ENCODE measurements at regions of chr5 and their contacts with region 1.

Region 1: DNA sequence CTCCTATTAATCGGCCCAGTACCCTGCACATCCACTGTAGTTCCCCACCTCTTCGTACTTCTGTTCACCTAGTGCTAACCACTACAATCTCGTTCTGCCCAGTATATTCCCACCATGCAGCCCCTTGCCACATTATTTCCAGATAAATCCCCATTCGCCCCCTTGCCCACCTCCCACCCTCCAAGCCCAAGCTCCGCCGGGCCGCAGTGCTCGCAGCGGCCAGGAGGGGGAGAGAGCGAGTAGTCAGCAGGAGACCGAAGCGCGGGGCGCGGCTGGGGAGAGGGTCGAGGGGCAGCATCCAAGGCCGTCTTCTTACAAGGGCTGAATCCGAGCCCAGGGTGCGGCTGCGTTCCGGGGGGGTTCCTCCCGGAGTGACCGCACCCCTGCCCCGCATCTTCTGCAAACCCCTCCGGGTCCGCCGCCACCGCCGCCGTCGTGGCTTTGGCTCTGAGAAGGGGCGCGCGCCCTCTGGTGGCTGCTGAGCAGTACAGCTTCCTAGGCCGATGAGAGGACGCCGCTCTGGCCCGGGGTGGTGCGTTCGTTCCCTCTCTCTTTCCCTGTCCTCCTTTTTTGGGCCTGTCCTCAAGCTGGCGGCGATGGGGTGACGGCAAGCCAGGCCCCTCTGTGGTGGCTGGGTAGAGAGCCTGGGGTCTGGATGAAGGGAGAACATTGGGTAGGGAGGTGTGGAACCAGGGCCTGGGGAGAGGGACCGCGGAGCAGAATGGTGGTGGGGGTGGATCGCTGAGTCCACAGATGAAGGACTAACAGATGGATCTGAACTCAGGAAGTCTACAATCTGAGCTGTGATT is 30.0 kb upstream of the PSD2 start:
- DNase-seq: peak; percentile 47
- H3K4me3 ChIP-seq: peak overlapping the region; percentile 59
- H3K27ac ChIP-seq: no peak overlapping the region
- H3K27me3 ChIP-seq: peaks cover 13% of the 10 kb centered on the region
- CTCF ChIP-seq: peak; percentile 88

Region 2: GRCh38 chr5:139403787-139404483 is 361.7 kb before region 1 on chr5 and contains the start of gene SPATA24:
- in situ Hi-C with region 1: loop called (anchors 25 kb)
- DNase-seq: peak; percentile 97
- H3K4me3 ChIP-seq: peak within 1 kb of the TSS; percentile 64
- H3K27ac ChIP-seq: peak within 1 kb of the TSS; percentile 96
- H3K27me3 ChIP-seq: no peaks in the 10 kb centered on the region
- CTCF ChIP-seq: no peak

Region 3: GRCh38 chr5:139633295-139634027 is 132.2 kb before region 1 on chr5:
- in situ Hi-C with region 1: loop called (anchors 25 kb)
- DNase-seq: no peak
- H3K4me3 ChIP-seq: no peak overlapping the region
- H3K27ac ChIP-seq: no peak overlapping the region
- H3K27me3 ChIP-seq: no peaks in the 10 kb centered on the region
- CTCF ChIP-seq: peak; percentile 99

Region 4: GRCh38 chr5:140540227-140540626 is 774.6 kb after region 1 on chr5:
- in situ Hi-C with region 1: no loop called
- DNase-seq: no peak
- H3K4me3 ChIP-seq: no peak overlapping the region
- H3K27ac ChIP-seq: no peak overlapping the region
- H3K27me3 ChIP-seq: no peaks in the 10 kb centered on the region
- CTCF ChIP-seq: no peak